ENCODE measurements at regions of chr3 and their contacts with region 1.

Region 1: DNA sequence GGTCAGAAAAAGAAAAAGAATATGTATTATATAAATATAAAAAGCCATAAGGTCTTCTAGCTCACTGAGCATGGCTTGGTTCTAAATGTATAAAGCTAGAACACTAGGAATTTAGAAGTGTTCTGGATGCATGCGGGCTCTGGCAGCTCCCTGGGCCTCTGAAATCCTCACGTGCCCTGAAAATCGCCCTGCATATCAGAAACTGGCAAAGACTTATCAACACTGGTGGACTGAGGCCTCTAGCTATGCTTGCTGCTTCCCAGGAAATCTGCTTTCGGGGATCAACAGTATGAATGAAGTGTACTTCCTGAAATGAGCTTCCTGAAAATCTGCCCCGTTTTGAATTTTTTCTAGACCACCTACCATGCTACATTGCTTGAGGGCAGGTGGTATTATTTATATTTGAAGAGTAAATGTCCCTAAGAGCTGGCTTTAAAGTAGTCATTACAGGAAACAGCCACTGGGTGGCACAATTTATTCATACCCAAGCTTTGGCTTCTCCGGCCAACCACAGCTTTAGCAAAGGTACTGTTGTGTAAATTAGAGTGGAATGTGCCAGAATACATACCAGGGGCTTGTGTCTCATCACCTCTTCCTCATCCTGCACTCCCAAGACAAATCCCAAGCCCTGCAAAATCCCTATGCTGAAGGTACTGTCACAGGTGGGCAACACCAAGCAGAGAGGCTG is 17.7 kb downstream of the CRTAP start:
- DNase-seq: no peak
- ATAC-seq: peak; percentile 75 to 79
- H3K4me3 ChIP-seq: no peak overlapping the region
- H3K27ac ChIP-seq: no peak overlapping the region
- H3K4me1 ChIP-seq: no peaks in the 10 kb centered on the region
- H3K27me3 ChIP-seq: no peaks in the 10 kb centered on the region

Region 2: GRCh38 chr3:33229066-33229465 is 97.6 kb after region 1 on chr3:
- intact Hi-C with region 1: loop called in 1 of 4 experiments (anchors 10 kb)
- DNase-seq: no peak
- ATAC-seq: no peak
- H3K4me3 ChIP-seq: no peak overlapping the region
- H3K27ac ChIP-seq: no peak overlapping the region
- H3K4me1 ChIP-seq: no peaks in the 10 kb centered on the region
- H3K27me3 ChIP-seq: no peaks in the 10 kb centered on the region

Region 3: DNA sequence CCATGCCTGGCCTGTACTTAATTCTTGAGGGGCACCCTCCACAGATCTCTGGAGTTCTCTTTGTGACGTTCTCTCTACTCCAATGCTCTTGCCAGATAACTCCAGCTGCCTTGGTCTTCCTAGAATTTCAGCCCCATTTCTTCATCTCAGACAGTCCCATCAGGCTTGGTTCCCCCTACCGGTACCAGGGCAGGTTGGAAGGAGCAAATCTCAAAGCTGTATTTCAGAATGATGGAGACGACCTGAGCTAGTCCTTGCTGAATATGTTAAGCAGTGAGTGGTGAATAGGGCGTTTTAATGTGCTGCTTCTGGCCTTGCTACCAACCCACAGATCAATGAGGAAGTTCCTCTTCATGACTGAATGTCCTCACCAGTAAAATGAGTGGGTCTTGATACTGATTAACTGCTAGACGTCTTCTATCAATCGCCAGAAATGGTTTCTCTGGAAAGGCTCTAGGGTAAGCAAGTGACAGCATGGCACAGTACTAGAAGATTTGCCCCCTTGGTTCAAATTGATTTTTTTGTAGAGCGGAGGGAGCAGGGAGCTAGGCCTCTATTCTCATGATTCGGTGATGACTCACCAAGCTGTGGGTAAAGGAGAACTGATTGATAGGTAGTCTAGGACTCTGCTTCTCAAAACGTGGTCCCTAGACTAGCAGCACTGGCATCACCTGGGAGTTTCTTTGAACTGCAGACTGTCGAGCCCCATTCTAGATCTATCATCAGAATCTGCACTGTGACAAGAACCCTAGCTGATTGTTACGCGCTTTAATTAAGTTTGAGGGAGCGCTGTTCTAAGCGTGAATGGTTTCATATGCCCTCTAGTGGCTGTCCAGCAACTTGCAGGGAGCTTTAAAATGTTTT is 241.0 kb after region 1 on chr3:
- intact Hi-C with region 1: loop called (anchors 2 to 5 kb)
- DNase-seq: no peak
- ATAC-seq: peak; percentile 64 to 67
- H3K4me3 ChIP-seq: no peak overlapping the region
- H3K27ac ChIP-seq: no peak overlapping the region
- H3K4me1 ChIP-seq: no peaks in the 10 kb centered on the region
- H3K27me3 ChIP-seq: no peaks in the 10 kb centered on the region